ENCODE measurements at regions of chr4 and their contacts with region 1.

Region 1: GRCh38 chr4:73653695-73654106 is 33.5 kb upstream of the RASSF6 start:
- DNase-seq: no peak
- H3K4me3 Mint-ChIP-seq: no peak overlapping the region
- H3K27ac Mint-ChIP-seq: no peak overlapping the region
- H3K4me1 Mint-ChIP-seq: no peaks in the 10 kb centered on the region
- H3K27me3 Mint-ChIP-seq: peaks cover 10% of the 10 kb centered on the region

Region 2: GRCh38 chr4:73311428-73311827 is 342.3 kb before region 1 on chr4:
- intact Hi-C with region 1: loop called (anchors 1 kb)
- DNase-seq: no peak
- H3K4me3 Mint-ChIP-seq: no peak overlapping the region
- H3K27ac Mint-ChIP-seq: no peak overlapping the region
- H3K4me1 Mint-ChIP-seq: no peaks in the 10 kb centered on the region
- H3K27me3 Mint-ChIP-seq: no peaks in the 10 kb centered on the region

Region 3: DNA sequence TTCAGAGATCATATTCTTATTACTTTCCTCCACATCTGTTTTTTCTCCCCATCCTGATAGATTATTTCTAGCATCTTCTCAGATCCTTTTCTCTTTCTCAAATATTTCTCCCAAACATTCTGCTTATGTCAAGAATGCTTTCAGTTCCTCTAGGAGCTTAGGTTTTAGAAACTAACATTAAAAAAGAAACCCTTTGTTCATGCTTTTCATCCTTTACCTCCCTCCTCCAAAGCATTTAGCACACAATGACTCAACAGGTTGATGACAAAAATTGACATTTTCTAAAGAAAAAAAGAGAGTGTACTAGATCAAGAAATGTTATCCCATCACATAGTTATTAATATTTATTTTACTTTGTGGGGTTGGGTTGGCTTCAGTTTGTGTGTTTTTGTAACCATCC is 266.1 kb before region 1 on chr4:
- intact Hi-C with region 1: no loop called
- DNase-seq: no peak
- H3K4me3 Mint-ChIP-seq: no peak overlapping the region
- H3K27ac Mint-ChIP-seq: no peak overlapping the region
- H3K4me1 Mint-ChIP-seq: no peaks in the 10 kb centered on the region
- H3K27me3 Mint-ChIP-seq: no peaks in the 10 kb centered on the region

Region 4: DNA sequence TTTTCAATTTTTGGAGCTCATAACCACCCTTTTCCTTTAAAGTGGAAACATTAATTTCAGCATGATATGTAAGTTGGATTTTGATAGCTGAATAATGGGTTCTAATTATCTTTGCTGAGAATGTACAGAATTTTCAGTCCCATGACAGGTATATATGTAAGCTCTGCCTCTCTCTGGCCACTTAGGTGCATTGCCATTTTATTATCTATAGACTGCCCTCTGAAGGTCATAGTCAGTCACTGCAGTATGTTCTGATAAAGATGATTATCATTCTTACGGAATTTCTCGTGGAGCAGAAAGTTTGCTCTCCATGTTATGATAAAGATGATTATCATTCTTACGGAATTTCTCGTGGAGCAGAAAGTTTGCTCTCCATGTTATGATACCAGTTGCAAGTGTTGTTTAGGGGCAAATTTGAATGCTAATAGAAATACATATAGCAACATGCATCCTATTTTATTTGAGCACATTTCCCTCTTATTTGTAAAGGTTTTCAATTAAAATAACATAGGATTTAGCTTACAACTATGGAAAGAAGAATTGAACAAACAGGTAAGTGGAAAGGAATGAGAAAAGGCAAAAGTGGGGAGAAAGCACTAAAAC is 207.3 kb before region 1 on chr4:
- intact Hi-C with region 1: loop called (anchors 10 kb)
- DNase-seq: no peak
- H3K4me3 Mint-ChIP-seq: no peak overlapping the region
- H3K27ac Mint-ChIP-seq: no peak overlapping the region
- H3K4me1 Mint-ChIP-seq: no peaks in the 10 kb centered on the region
- H3K27me3 Mint-ChIP-seq: peaks cover under 1% of the 10 kb centered on the region

Region 5: GRCh38 chr4:73573794-73574406 is 79.8 kb before region 1 on chr4:
- intact Hi-C with region 1: loop called (anchors 1 kb)
- DNase-seq: no peak
- H3K4me3 Mint-ChIP-seq: no peak overlapping the region
- H3K27ac Mint-ChIP-seq: no peak overlapping the region
- H3K4me1 Mint-ChIP-seq: no peaks in the 10 kb centered on the region
- H3K27me3 Mint-ChIP-seq: peaks cover 4% of the 10 kb centered on the region

Region 6: GRCh38 chr4:73603271-73603710 is 50.4 kb before region 1 on chr4:
- intact Hi-C with region 1: no loop called
- DNase-seq: no peak
- H3K4me3 Mint-ChIP-seq: no peak overlapping the region
- H3K27ac Mint-ChIP-seq: no peak overlapping the region
- H3K4me1 Mint-ChIP-seq: peaks cover 13% of the 10 kb centered on the region
- H3K27me3 Mint-ChIP-seq: no peaks in the 10 kb centered on the region